ENCODE measurements at regions of chr18 and their contacts with region 1.

Region 1: DNA sequence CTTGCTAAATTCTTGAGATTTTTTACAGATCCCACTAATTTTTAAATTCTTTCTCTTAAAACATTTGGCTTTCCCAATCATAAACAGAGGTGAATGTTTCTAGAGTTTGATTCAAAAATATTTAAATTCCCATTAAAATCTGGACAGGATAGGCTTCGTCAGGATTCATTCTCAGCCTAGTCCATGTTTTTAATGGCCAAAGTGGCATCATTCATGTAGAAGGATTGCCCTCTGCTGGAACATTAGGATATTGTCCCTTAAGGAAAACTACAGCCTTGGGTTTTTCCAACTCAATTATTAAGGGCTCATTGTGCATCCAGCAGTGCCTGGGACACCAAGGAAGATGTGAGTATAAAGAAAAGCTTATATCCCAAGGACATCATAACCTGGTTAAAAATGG is 71.7 kb downstream of the TPGS2 start:
- DNase-seq: peak in 1 of 2 donors; percentile 77
- H3K4me3 ChIP-seq: no peak overlapping the region
- H3K27ac ChIP-seq: no peak overlapping the region
- H3K4me1 ChIP-seq: peaks cover 0 to 12% (median 0%) of the 10 kb centered on the region in 4 donors
- H3K27me3 ChIP-seq: no peaks in the 10 kb centered on the region
- CTCF ChIP-seq: peak in 5 of 7 experiments; percentile 40 to 61 (median 50)
- EP300 ChIP-seq: no peak
- POLR2A ChIP-seq: no peak

Region 2: GRCh38 chr18:36451454-36452251 is 305.4 kb before region 1 on chr18:
- intact Hi-C with region 1: no loop called
- DNase-seq: no peak
- H3K4me3 ChIP-seq: no peak overlapping the region
- H3K27ac ChIP-seq: no peak overlapping the region
- H3K4me1 ChIP-seq: peaks cover 0 to 1% (median 0%) of the 10 kb centered on the region in 4 donors
- H3K27me3 ChIP-seq: no peaks in the 10 kb centered on the region
- CTCF ChIP-seq: no peak
- EP300 ChIP-seq: no peak
- POLR2A ChIP-seq: no peak

Region 3: GRCh38 chr18:36688020-36688965 is 68.8 kb before region 1 on chr18:
- intact Hi-C with region 1: loop called (anchors 10 kb)
- DNase-seq: peak; percentile 65 to 83
- H3K4me3 ChIP-seq: no peak overlapping the region
- H3K27ac ChIP-seq: no peak overlapping the region
- H3K4me1 ChIP-seq: peaks cover 0 to 14% (median 7%) of the 10 kb centered on the region in 4 donors
- H3K27me3 ChIP-seq: peaks cover 0 to 3% (median 0%) of the 10 kb centered on the region in 3 donors
- CTCF ChIP-seq: peak in 5 of 7 experiments; percentile 47 to 84 (median 81)
- EP300 ChIP-seq: no peak
- POLR2A ChIP-seq: no peak

Measured in stomach (tissue), 19 donors.